Dorsolateral prefrontal cortex (tissue), 120 donors: ENCODE measurements at regions of chr3 and their contacts with region 1.

Region 1: GRCh38 chr3:94985799-94986198 is 922.9 kb downstream of the NSUN3 start:
- DNase-seq: no peak
- H3K4me3 ChIP-seq: no peak overlapping the region
- H3K27ac ChIP-seq: no peak overlapping the region
- H3K27me3 ChIP-seq: no peaks in the 10 kb centered on the region
- CTCF ChIP-seq: no peak

Region 2: GRCh38 chr3:95002438-95003046 is 16.7 kb after region 1 on chr3:
- intact Hi-C with region 1: loop called in 1 of 2 experiments (anchors 2 kb)
- DNase-seq: no peak
- H3K4me3 ChIP-seq: no peak overlapping the region
- H3K27ac ChIP-seq: no peak overlapping the region
- H3K27me3 ChIP-seq: no peaks in the 10 kb centered on the region
- CTCF ChIP-seq: no peak